Activated T-helper 1 cell treated with anti-CD3 and anti-CD28 coated beads, Interleukin-12 subunit alpha, Interleukin-12 subunit beta, Interleukin-2, Interleukin-4 antibody, amounts not matched to agents 30 ng/mL and 10 ng/mL and 1 ng/mL, durations not matched to agents 14 hours and 24 hours and 36 hours (primary cell): ENCODE measurements at regions of chr22 and their contacts with region 1.

Region 1: GRCh38 chr22:44192098-44192810 is 11.5 kb downstream of the PARVG start:
- DNase-seq: peak; percentile 29
- H3K4me3 Mint-ChIP-seq: no peak overlapping the region
- H3K27ac Mint-ChIP-seq: no peak overlapping the region
- H3K4me1 Mint-ChIP-seq: peaks cover 34% of the 10 kb centered on the region
- H3K27me3 Mint-ChIP-seq: no peaks in the 10 kb centered on the region

Region 2: DNA sequence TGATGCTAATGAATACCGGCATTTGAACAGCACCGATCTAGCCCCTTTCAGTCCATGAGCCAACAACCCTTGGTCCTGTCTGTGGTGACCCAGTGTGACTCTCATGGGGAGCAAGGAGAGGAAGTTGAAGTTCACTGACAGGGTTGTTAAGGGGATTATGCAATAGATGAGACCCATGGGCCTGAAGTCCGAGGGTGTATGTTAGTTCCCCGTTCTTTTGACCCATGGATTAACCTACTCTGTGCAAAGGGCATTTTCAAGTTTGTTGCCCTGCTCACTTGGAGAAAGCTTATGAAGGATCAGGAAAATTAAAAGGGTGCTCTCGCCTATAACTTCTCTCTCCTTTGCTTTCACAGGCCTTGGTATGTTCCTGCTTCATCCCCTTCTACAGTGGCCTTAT is 263.8 kb before region 1 on chr22:
- intact Hi-C with region 1: no loop called
- DNase-seq: no peak
- H3K4me3 Mint-ChIP-seq: no peak overlapping the region
- H3K27ac Mint-ChIP-seq: no peak overlapping the region
- H3K4me1 Mint-ChIP-seq: no peaks in the 10 kb centered on the region
- H3K27me3 Mint-ChIP-seq: peaks cover 10% of the 10 kb centered on the region

Region 3: GRCh38 chr22:44147821-44148574 is 44.3 kb before region 1 on chr22:
- intact Hi-C with region 1: no loop called
- DNase-seq: no peak
- H3K4me3 Mint-ChIP-seq: no peak overlapping the region
- H3K27ac Mint-ChIP-seq: no peak overlapping the region
- H3K4me1 Mint-ChIP-seq: peaks cover 4% of the 10 kb centered on the region
- H3K27me3 Mint-ChIP-seq: no peaks in the 10 kb centered on the region

Region 4: DNA sequence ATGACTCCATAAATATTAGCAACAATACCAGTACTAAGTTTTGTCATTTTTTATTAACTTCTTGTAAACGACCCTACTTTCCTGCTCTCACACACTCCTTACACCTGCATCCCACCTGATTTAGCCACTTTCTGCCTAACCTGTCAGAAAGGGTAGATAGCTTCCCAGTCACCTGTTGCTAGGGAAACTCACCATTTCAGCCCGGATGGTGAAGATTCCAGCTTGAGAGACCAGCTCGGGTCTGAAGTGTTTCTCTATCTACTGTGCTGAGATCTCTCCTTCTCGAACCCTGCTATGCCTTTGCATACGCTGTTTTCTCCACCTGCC is 11.6 kb before region 1 on chr22 and contains the start of gene PARVG:
- intact Hi-C with region 1: loop called (anchors 1 kb)
- DNase-seq: peak; percentile 33
- H3K4me3 Mint-ChIP-seq: peak within 1 kb of the TSS; percentile 81
- H3K27ac Mint-ChIP-seq: peak within 1 kb of the TSS; percentile 97
- H3K4me1 Mint-ChIP-seq: peaks cover 19% of the 10 kb centered on the region
- H3K27me3 Mint-ChIP-seq: peaks cover 9% of the 10 kb centered on the region
- total RNA-seq, gene PARVG: 50.6 and 52.8 TPM in 2 replicates

Region 5: GRCh38 chr22:44337678-44338004 is 145.4 kb after region 1 on chr22:
- intact Hi-C with region 1: loop called (anchors 10 kb)
- DNase-seq: no peak
- H3K4me3 Mint-ChIP-seq: no peak overlapping the region
- H3K27ac Mint-ChIP-seq: no peak overlapping the region
- H3K4me1 Mint-ChIP-seq: no peaks in the 10 kb centered on the region
- H3K27me3 Mint-ChIP-seq: peaks cover 4% of the 10 kb centered on the region

Region 6: DNA sequence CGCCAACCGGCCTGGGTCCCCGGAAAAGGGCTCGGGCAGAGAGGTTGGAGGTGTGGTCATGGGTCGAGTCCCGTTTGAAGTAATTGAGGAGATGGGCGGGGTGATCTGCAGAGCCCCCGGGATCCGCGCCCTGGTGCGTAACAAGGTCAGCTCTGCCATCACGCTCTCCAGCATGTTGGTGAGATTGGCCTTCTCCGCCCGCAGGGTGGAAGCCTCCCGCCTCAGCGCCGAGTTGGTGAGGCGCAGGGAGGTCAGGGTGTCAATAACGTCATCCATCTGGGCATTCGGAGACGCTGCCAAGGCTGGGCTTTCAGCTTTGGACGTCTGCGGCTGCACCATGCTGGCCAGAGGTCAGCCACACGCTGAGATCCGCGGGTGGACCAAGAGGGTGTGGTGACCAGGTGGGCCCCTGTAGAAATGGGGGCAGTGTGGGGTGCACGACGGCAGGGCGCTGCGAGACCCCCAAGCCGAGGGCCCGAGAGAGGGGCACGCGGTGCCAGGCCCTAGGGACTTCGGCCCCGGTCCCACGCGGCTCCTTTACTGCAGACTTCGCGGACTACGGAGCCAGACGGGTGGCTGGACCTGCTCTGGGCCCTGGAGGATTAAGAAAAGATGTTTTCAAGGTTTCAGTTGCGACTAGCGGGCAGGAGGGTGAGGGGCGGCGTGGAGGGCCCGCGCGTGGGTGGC is 305.1 kb after region 1 on chr22:
- intact Hi-C with region 1: loop called (anchors 5 kb)
- DNase-seq: no peak
- H3K4me3 Mint-ChIP-seq: peak overlapping the region; percentile 81
- H3K27ac Mint-ChIP-seq: no peak overlapping the region
- H3K4me1 Mint-ChIP-seq: peaks cover 30% of the 10 kb centered on the region
- H3K27me3 Mint-ChIP-seq: no peaks in the 10 kb centered on the region

Region 7: DNA sequence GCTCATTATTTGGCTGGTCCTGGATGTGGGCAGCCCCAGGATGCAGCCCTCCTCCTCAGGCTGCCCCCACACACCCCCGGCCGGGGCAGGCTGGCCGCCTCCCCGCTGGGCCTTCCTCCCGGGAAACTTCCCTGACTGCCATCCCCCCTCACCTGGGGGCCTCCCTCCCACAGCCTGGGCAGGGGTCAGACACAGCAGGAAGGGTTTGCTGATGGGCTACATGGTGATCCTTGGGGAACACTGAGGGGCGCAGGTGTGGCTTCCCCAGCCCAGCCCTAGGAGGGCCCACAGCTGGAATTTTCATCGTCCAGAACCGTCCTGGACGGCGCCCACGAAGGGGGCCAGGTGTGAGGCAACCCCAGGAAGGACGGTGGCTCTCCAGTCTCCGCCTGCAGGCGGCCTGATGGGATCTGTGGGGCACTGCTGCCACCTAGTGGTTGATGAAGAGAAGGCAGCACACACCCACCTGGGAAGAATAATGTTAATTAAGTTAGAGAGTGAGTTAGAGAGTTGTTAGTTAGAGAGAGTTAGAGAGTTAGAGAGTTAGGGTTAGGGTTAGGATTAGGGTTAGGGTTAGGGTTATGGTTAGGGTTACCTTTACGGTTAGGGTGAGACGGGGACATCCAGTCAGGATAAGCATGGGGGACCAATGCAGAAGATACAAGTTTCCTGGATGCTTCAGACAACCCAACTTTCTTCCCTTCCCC is 433.9 kb after region 1 on chr22:
- intact Hi-C with region 1: loop called (anchors 10 kb)
- DNase-seq: peak; percentile 70
- H3K4me3 Mint-ChIP-seq: no peak overlapping the region
- H3K27ac Mint-ChIP-seq: no peak overlapping the region
- H3K4me1 Mint-ChIP-seq: no peaks in the 10 kb centered on the region
- H3K27me3 Mint-ChIP-seq: peaks cover 7% of the 10 kb centered on the region